ENCODE measurements at regions of chr4 and their contacts with region 1.

Region 1: DNA sequence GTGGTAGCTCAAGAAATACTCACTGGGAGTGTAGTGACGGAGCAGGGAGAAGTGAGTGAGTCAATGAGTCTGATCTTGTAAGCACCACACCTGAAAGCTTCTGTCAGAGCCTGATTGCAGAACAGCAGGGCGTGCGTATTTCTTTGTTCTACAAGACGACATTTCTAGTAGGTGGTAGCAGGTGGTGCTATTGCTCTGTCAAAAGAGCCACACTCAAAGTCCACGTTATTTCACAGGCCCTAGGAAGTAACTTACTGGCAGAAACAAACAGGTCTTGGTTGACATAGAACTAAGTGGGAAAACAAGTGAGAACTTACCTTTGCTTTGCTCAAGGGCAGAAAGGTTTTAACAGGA is 46.4 kb upstream of the SPRY1 start:
- DNase-seq: peak; percentile 75 to 89 (median 78)
- ATAC-seq: peak; percentile 89
- H3K4me3 ChIP-seq: no peak overlapping the region
- H3K27ac ChIP-seq: peak overlapping the region; percentile 45; the same call in 1 of the 3 replicates
- H3K4me1 ChIP-seq: peaks cover 16 to 24% of the 10 kb centered on the region in 2 experiments
- H3K27me3 ChIP-seq: no peaks in the 10 kb centered on the region
- CTCF ChIP-seq: peak; percentile 67 to 76 (median 74)
- EP300 ChIP-seq: peak; percentile 67
- POLR2A ChIP-seq: no peak
- RAD21 ChIP-seq: peak; percentile 75 to 89

Region 2: DNA sequence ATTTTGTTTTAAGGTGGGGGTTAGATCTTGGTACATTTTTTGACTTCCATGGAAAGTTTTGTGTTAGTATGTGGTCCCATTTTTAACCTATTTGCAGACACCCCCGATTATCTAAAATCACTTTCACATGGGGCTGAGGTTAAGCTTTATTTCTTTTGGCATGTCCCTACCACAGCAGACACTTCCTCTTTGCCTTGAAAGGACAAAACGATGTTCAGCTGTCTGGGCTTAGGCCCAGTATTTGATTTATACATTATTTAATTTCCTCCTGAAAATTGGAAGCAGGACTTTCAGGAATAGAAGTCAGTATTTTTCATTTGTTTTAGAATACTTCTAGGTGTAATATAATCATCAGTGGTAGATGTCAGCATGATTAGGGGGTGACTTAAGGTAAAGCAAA is 66.0 kb before region 1 on chr4:
- CTCF ChIA-PET with region 1: no interaction called
- POLR2A ChIA-PET with region 1: no interaction called
- in situ Hi-C with region 1: no loop called
- intact Hi-C with region 1: no loop called
- DNase-seq: no peak
- ATAC-seq: no peak
- H3K4me3 ChIP-seq: no peak overlapping the region
- H3K27ac ChIP-seq: no peak overlapping the region
- H3K4me1 ChIP-seq: no peaks in the 10 kb centered on the region
- H3K27me3 ChIP-seq: no peaks in the 10 kb centered on the region
- CTCF ChIP-seq: no peak
- EP300 ChIP-seq: no peak
- POLR2A ChIP-seq: no peak
- RAD21 ChIP-seq: no peak

Region 3: GRCh38 chr4:123396307-123397143 is 46.4 kb after region 1 on chr4 and contains the start of gene SPRY1:
- CTCF ChIA-PET with region 1: no interaction called
- POLR2A ChIA-PET with region 1: interaction called, 3 read pairs
- in situ Hi-C with region 1: no loop called
- intact Hi-C with region 1: loop called (anchors 2 kb)
- DNase-seq: peak; percentile 49 to 82 (median 58)
- ATAC-seq: peak; percentile 83
- H3K4me3 ChIP-seq: peak within 1 kb of the TSS; percentile 36
- H3K27ac ChIP-seq: peak within 1 kb of the TSS; percentile 18; the same call in 1 of the 3 replicates
- H3K4me1 ChIP-seq: peaks cover 2 to 19% of the 10 kb centered on the region in 2 experiments; a peak in 3 of 5 replicates
- H3K27me3 ChIP-seq: peaks cover 0 to 8% of the 10 kb centered on the region in 2 experiments; a peak in 1 of 5 replicates
- CTCF ChIP-seq: no peak
- EP300 ChIP-seq: no peak
- POLR2A ChIP-seq: no peak
- RAD21 ChIP-seq: no peak
- polyA plus RNA-seq, gene SPRY1: 0.18 TPM in 1 of 2 experiments, not detected in the other

Region 4: GRCh38 chr4:123661080-123661737 is 311.0 kb after region 1 on chr4:
- CTCF ChIA-PET with region 1: interaction called, 5 read pairs
- POLR2A ChIA-PET with region 1: no interaction called
- in situ Hi-C with region 1: no loop called
- intact Hi-C with region 1: loop called (anchors 1 kb)
- DNase-seq: peak in 2 of 4 experiments; percentile 14 to 20
- ATAC-seq: no peak
- H3K4me3 ChIP-seq: no peak overlapping the region
- H3K27ac ChIP-seq: no peak overlapping the region
- H3K4me1 ChIP-seq: no peaks in the 10 kb centered on the region; a peak in 1 of 5 replicates
- H3K27me3 ChIP-seq: no peaks in the 10 kb centered on the region
- CTCF ChIP-seq: peak in 2 of 3 experiments; percentile 39 to 59; a peak in 3 of 6 replicates
- EP300 ChIP-seq: no peak
- POLR2A ChIP-seq: no peak
- RAD21 ChIP-seq: peak; percentile 30 to 62; a peak in 3 of 4 replicates

Region 5: DNA sequence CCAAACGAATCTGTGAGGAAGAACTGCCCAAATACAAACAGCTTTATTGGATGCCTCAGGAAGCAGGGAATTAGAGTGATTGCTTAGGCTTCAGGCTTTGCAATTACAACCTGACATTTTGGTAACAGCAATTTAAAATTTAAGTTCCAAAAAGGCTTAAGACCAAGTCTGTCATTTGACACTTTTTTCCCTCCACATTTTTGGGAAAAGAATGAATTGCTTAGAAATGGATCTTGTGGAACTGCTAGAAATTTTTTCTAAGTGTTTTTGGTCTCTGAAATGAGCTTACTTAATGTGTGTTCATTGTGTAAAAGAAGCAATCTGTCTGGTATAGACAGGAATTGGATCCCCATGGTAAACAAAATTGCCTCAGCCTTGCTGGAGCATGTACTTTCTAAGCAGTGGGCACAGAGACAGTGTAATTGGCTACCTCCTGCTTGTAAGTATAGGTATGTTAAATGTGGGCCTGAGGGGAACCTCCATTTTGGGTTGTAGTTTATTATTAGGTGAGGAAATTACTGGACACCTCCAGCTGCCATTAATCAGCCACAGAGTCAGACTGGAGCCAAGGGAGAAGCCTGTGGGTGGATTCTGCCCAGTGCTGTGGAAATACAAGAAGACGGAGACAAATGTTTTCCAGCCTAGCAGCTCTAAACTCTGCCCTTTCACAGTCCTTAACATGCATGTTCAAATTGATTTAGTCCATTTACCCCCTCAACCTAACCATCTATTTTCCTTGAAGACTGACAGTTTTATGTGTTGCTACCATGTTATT is 519.3 kb after region 1 on chr4:
- CTCF ChIA-PET with region 1: no interaction called
- POLR2A ChIA-PET with region 1: no interaction called
- in situ Hi-C with region 1: no loop called
- intact Hi-C with region 1: no loop called
- DNase-seq: no peak
- ATAC-seq: no peak
- H3K4me3 ChIP-seq: no peak overlapping the region
- H3K27ac ChIP-seq: no peak overlapping the region
- H3K4me1 ChIP-seq: no peaks in the 10 kb centered on the region
- H3K27me3 ChIP-seq: no peaks in the 10 kb centered on the region
- CTCF ChIP-seq: no peak
- EP300 ChIP-seq: no peak
- POLR2A ChIP-seq: no peak
- RAD21 ChIP-seq: no peak

Region 6: DNA sequence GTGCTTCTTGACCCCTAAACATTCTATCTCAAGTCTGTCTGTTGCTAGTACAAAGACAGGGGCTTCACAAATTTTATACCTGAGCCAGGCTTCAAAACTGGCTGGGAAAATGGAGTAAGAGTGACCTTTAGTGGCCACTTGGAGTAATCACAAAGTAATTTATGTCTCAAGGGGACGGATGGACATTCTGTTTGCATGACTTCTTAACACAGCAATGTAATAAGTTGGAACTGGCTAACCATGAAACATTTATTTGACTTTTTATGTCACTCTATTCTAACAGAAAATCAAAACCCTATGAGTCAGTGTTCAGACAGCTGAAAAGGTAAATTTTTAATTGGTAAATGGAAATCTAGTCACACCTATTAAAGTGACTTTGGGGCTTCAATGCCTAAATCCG is 761.8 kb after region 1 on chr4:
- CTCF ChIA-PET with region 1: no interaction called
- POLR2A ChIA-PET with region 1: no interaction called
- in situ Hi-C with region 1: no loop called
- intact Hi-C with region 1: loop called (anchors 5 kb)
- DNase-seq: peak in 2 of 4 experiments; percentile 8 to 15
- ATAC-seq: no peak
- H3K4me3 ChIP-seq: no peak overlapping the region
- H3K27ac ChIP-seq: no peak overlapping the region
- H3K4me1 ChIP-seq: no peaks in the 10 kb centered on the region
- H3K27me3 ChIP-seq: no peaks in the 10 kb centered on the region
- CTCF ChIP-seq: peak in 1 of 3 experiments; percentile 17; a peak in 1 of 6 replicates
- EP300 ChIP-seq: no peak
- POLR2A ChIP-seq: no peak
- RAD21 ChIP-seq: peak; percentile 47 to 59

Region 7: DNA sequence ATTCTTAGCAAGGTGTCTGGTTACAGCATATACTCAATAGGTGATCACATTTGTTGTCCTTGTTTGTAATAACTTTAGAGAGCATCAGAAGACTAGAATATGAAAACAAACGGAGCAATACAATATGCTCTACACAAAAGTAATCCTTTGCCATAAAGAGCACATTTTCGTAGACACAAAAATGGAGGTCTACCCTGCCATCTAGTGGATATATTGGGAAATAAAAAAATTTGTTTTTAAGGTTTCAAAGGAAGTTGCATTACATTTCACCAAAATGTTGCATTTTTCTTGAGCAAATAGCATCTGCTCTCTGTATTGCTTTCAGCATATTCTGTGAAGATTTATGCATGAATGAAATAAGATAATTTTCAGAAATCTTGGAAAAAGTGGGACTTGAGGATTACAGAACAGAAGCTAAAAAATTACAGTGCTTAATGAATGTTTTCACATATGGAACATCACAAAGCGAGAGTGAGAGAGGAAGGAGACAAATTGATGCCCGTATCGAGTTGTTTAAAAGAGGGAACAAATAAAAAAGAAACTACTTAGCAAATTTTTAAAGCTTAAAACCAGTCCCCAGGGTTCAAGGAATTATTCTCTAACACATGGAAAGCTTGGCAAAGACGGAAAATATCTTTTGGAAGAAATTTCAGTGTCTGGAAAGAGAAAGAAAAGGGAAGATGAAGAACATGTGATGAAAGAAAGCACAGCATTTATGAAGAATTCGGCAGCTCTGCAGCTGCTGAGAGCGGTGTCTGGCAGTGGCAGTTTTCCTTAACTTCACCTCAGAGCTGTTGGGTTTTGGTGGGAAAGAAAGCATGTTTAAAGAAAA is 972.3 kb after region 1 on chr4:
- CTCF ChIA-PET with region 1: no interaction called
- POLR2A ChIA-PET with region 1: no interaction called
- in situ Hi-C with region 1: no loop called
- intact Hi-C with region 1: loop called (anchors 1 kb)
- DNase-seq: peak; percentile 9 to 21 (median 17)
- ATAC-seq: peak; percentile 28; the same call in 1 of the 3 replicates
- H3K4me3 ChIP-seq: no peak overlapping the region
- H3K27ac ChIP-seq: no peak overlapping the region
- H3K4me1 ChIP-seq: no peaks in the 10 kb centered on the region
- H3K27me3 ChIP-seq: no peaks in the 10 kb centered on the region
- CTCF ChIP-seq: peak in 2 of 3 experiments; percentile 21 to 55; a peak in 4 of 6 replicates
- EP300 ChIP-seq: no peak
- POLR2A ChIP-seq: no peak
- RAD21 ChIP-seq: peak; percentile 46 to 57

Measured in K562 (cell line).